Calu3 (cell line): ENCODE measurements at regions of chr6 and their contacts with region 1.

Region 1: DNA sequence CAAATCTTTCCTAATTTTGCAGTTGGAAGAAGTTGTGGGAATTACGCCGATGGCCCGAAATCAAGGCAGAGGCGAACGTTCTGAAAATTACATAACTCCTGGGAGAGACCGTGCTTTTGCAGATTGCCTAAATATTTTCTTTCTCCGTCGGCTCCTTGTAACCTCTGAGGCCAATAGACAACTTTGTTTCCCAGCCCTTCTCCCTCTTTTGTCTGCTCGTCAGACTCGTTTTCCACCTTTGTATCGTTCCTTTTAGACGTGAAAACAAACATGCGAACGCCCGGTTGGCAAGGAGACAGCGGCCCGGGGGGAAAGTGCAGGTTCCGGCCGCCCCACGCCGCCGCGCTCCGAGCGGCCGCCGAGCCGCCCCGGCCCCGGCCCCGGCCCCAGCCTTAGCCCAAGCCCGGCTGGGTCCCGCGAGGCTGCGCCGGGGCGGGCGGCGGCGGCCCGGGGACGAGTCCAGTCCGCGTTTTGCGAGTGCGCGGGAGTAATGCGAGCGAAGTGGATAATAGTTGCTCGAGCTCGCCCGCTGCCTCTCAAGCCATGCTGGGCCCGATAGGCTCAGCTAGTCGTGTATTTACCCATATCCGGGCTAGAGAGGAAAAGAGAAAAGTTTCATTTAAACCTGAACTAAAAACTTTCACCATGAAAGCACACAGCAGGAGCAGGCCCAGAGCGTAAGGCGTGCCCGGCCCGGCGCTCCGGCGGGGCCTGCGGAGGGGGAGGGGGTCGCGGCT is at the start of gene ARID1B:
- DNase-seq: peak; percentile 65
- H3K4me3 Mint-ChIP-seq: peak within 1 kb of the TSS; percentile 89
- H3K27ac Mint-ChIP-seq: peak within 1 kb of the TSS; percentile 88
- H3K4me1 Mint-ChIP-seq: no peaks in the 10 kb centered on the region
- H3K27me3 Mint-ChIP-seq: no peaks in the 10 kb centered on the region
- CTCF ChIP-seq: no peak
- total RNA-seq, gene ARID1B: 50.5 and 53.5 TPM in 2 replicates

Region 2: GRCh38 chr6:156485150-156485549 is 291.9 kb before region 1 on chr6:
- CTCF ChIA-PET with region 1: no interaction called
- intact Hi-C with region 1: no loop called
- DNase-seq: no peak
- H3K4me3 Mint-ChIP-seq: no peak overlapping the region
- H3K27ac Mint-ChIP-seq: no peak overlapping the region
- H3K4me1 Mint-ChIP-seq: no peaks in the 10 kb centered on the region
- H3K27me3 Mint-ChIP-seq: no peaks in the 10 kb centered on the region
- CTCF ChIP-seq: no peak

Region 3: GRCh38 chr6:156564127-156564806 is 212.7 kb before region 1 on chr6:
- CTCF ChIA-PET with region 1: no interaction called
- intact Hi-C with region 1: loop called (anchors 10 kb)
- DNase-seq: peak; percentile 76
- H3K4me3 Mint-ChIP-seq: no peak overlapping the region
- H3K27ac Mint-ChIP-seq: no peak overlapping the region
- H3K4me1 Mint-ChIP-seq: no peaks in the 10 kb centered on the region
- H3K27me3 Mint-ChIP-seq: no peaks in the 10 kb centered on the region
- CTCF ChIP-seq: peak; percentile 84

Region 4: GRCh38 chr6:156719720-156720563 is 57.1 kb before region 1 on chr6:
- CTCF ChIA-PET with region 1: interaction called, 3 read pairs
- intact Hi-C with region 1: loop called (anchors 2 kb)
- DNase-seq: peak; percentile 88
- H3K4me3 Mint-ChIP-seq: peak overlapping the region; percentile 41
- H3K27ac Mint-ChIP-seq: peak overlapping the region; percentile 76
- H3K4me1 Mint-ChIP-seq: peaks cover 33% of the 10 kb centered on the region
- H3K27me3 Mint-ChIP-seq: no peaks in the 10 kb centered on the region
- CTCF ChIP-seq: no peak

Region 5: GRCh38 chr6:156933201-156934068 is 156.4 kb after region 1 on chr6:
- CTCF ChIA-PET with region 1: no interaction called
- intact Hi-C with region 1: loop called (anchors 5 kb)
- DNase-seq: peak; percentile 41
- H3K4me3 Mint-ChIP-seq: peak overlapping the region; percentile 61
- H3K27ac Mint-ChIP-seq: peak overlapping the region; percentile 80
- H3K4me1 Mint-ChIP-seq: peaks cover 19% of the 10 kb centered on the region
- H3K27me3 Mint-ChIP-seq: no peaks in the 10 kb centered on the region
- CTCF ChIP-seq: no peak

Region 6: GRCh38 chr6:157034436-157035230 is 257.6 kb after region 1 on chr6:
- CTCF ChIA-PET with region 1: no interaction called
- intact Hi-C with region 1: loop called (anchors 5 kb)
- DNase-seq: no peak
- H3K4me3 Mint-ChIP-seq: no peak overlapping the region
- H3K27ac Mint-ChIP-seq: no peak overlapping the region
- H3K4me1 Mint-ChIP-seq: no peaks in the 10 kb centered on the region
- H3K27me3 Mint-ChIP-seq: no peaks in the 10 kb centered on the region
- CTCF ChIP-seq: no peak

Region 7: DNA sequence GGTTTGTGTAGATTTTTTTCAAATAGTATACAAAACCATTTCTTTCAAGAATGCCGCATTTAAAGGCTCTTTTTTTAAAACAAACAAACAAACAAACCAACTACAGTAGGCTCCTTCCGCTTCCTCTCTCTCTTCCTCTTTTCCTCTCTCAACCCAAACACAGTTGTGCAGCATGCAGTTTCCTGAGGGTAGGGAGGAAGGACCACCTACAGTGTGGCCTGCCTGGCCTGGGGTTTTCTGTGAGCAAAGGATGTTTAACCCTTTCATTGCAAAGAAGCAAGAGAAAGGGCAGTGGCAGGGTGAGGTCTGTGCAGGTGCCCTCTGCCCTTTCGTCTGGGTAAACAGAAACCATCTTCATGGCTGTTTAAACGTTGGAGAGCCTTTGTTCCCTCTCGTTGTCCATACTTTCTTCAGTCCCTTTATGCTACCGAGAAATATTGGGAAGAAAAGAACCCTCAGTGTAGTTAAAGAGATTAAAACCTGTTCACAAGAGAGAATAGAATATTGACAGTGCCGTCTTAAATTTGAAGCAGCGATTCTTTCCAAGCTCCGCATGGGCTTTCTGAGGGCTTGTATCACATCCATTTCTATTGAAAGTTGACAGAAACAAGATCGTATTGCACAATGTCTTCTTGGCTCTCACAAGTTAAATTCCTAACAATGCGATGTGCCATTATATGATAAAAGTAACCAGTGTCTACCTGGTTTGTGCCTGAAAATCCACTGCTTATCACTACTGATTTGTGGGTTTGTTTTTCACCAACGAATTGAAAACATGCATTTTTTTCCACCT is 830.5 kb after region 1 on chr6:
- CTCF ChIA-PET with region 1: no interaction called
- intact Hi-C with region 1: no loop called
- DNase-seq: no peak
- H3K4me3 Mint-ChIP-seq: no peak overlapping the region
- H3K27ac Mint-ChIP-seq: no peak overlapping the region
- H3K4me1 Mint-ChIP-seq: peaks cover 12% of the 10 kb centered on the region
- H3K27me3 Mint-ChIP-seq: no peaks in the 10 kb centered on the region
- CTCF ChIP-seq: no peak